Activated CD8-positive, alpha-beta T cell treated with anti-CD3 and anti-CD28 coated beads, Interleukin-2, amount 10 ng/mL, durations not matched to agents 7 days and 5 days (primary cell): ENCODE measurements at regions of chr2 and their contacts with region 1.

Region 1: GRCh38 chr2:96336104-96336775 is 674 bp downstream of the NCAPH start:
- DNase-seq: no peak
- ATAC-seq: no peak
- H3K4me3 Mint-ChIP-seq: peak overlapping the region; percentile 92
- H3K27ac Mint-ChIP-seq: peak overlapping the region; percentile 85
- H3K4me1 Mint-ChIP-seq: peaks cover 63% of the 10 kb centered on the region
- H3K27me3 Mint-ChIP-seq: no peaks in the 10 kb centered on the region

Region 2: DNA sequence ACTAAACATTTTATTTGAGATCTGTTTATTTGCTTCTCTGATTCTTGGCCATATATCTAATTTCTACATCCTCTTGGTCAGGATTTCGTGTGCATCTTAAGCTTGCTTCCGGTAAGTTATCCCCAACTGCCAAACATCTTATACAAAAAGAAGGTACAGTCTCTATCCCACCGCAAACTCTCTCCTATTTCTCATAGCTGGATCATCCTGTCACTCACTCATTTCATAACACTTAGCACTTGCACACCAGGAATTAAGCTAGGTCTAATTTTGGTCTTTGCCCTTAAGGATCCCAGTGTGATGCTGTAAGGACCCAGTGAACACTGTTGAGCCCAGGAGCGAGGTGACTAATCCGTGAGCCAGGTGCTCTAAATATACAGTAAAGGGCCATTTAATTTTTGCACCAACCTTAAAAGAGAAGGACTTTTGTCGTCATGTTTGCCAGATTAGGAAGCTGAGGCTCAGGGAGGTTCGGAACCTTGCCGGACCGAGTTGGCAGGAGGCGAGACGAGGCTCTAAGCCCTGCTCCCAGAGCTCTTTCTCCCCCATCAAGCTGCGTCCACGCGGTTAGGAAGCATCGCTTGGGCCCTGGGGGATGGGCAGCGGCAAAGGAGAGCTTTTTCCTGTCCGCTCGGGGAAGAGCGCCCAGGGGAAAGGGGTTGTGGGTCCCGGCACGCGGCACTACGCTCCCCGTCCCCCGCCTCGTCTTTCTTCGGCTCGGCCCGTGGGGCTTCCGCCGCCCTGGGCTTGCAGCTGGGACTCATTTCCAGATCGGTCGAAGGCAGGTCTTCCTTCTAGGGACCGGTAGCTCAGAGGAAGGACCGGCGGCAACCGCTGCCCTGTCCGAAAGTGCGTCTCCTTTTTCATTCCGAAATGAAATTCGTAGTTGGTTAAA is 15.3 kb before region 1 on chr2:
- CTCF ChIA-PET with region 1: interaction called, 23 read pairs
- POLR2A ChIA-PET with region 1: interaction called, 51 read pairs
- DNase-seq: no peak
- ATAC-seq: peak; percentile 29
- H3K4me3 Mint-ChIP-seq: peak overlapping the region; percentile 78
- H3K27ac Mint-ChIP-seq: peak overlapping the region; percentile 89
- H3K4me1 Mint-ChIP-seq: peaks cover 61% of the 10 kb centered on the region
- H3K27me3 Mint-ChIP-seq: no peaks in the 10 kb centered on the region

Region 3: DNA sequence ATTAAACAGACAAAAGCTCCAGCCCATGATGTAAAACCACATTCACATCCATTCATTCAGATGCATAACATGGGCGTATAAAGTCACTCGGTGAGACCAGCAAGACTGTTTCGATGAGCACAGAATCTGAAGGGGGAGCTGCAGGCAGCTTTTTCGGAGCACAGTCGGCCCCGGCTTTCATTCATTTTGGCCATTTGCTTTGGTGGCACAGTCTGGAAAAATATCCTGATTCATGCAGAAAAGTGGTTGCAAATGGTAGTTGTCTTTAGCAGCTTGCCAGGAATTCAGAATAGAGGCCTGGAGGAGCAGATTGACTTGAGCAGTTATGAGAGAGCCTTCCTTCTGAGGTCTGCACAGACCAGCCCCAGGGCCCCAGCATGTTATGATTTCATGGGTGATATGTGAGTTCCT is 211.5 kb after region 1 on chr2:
- CTCF ChIA-PET with region 1: no interaction called
- POLR2A ChIA-PET with region 1: no interaction called
- DNase-seq: no peak
- ATAC-seq: no peak
- H3K4me3 Mint-ChIP-seq: no peak overlapping the region
- H3K27ac Mint-ChIP-seq: peak overlapping the region; percentile 18
- H3K4me1 Mint-ChIP-seq: peaks cover 44% of the 10 kb centered on the region
- H3K27me3 Mint-ChIP-seq: no peaks in the 10 kb centered on the region

Region 4: GRCh38 chr2:96756788-96757479 is 420.7 kb after region 1 on chr2:
- CTCF ChIA-PET with region 1: no interaction called
- POLR2A ChIA-PET with region 1: no interaction called
- DNase-seq: no peak
- ATAC-seq: no peak
- H3K4me3 Mint-ChIP-seq: no peak overlapping the region
- H3K27ac Mint-ChIP-seq: no peak overlapping the region
- H3K4me1 Mint-ChIP-seq: peaks cover 20% of the 10 kb centered on the region
- H3K27me3 Mint-ChIP-seq: peaks cover 2% of the 10 kb centered on the region